Head of caudate nucleus (tissue), 42 donors: ENCODE measurements at regions of chr14 and their contacts with region 1.

Region 1: GRCh38 chr14:99797231-99797630 is 4.0 kb downstream of the EML1 start:
- DNase-seq: no peak

Region 2: DNA sequence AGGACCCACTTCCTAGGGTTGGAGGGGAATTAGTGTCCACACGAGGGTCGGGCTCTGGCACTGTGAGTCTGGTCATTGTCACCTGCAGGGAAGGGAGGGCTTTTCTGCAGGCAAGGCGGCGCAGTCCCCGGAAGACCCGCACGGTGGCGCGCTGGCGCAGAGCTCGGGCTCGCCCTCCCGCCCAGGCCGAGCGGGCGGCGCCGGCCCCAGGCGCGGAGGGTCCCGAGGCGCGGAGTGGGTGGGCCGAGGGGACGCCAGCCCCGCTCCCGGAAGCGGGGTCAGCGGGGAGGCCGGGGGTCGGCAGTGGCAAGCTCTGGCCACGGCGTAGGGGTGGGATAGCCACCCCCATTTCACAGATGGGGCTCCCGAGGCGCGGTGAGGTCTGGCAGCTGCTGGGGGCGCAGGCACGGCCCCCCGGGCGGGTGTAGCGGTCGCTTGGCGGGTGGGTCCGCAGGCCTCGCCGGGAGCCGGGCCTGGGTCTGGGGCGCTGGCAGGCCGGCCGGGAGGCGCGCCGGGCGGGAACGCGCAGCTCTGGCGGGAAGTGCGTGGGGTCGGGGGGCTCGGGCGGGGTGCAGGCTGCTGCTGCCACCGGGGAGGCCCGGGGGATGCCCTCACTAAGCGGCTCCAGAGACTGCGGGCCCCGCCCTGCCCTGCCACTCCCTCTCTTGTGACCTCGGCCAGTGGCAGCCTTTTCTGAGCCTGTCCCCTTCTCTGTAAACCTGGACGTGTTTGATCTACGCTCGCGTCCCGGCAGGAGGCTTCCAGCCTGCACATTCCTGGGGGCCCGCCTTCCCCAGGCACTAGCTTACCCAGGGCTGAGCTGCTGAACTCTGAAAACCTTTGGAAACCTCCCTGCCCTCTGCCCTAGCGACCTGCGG is 67.0 kb before region 1 on chr14:
- intact Hi-C with region 1: loop called (anchors 5 kb)
- DNase-seq: peak in 41 of 42 donors; percentile 54 to 91 (median 80)